ENCODE measurements at regions of chr3 and their contacts with region 1.

Region 1: DNA sequence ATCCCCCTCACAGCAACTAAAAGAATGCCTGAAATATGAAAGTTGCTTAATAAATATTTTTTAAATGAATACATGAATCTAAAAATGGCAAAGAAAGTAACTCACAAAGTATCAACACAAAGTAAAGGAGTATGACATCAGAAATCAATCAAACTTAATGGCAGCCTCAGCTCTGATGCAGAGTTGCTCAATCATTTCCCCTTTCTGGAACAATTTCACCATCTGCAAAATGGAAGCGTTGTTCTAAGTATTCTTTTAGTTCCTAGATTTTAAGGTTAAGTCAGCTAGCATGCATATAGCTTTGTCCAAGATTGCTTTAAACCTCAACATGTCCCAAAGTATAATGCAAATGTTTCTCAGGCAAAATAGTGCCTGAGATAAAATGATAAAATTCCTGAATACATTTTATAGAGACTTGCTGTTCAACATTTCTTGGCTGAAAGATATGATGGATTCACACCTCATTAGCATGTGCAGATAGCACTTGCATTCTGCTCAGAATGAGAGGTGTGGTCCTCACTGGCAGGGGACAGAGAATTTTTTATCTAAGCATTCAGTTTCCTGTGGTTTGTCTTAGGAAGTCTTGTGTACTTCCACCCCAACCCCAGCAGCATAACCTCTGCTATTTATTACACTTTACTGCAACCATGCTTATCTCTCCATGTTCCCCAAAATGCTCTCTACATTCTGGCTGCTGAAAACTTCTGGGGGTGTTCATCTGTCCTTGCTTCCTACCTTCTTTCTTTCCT is 429.3 kb downstream of the GRM7 start:
- DNase-seq: no peak
- ATAC-seq: no peak

Region 2: DNA sequence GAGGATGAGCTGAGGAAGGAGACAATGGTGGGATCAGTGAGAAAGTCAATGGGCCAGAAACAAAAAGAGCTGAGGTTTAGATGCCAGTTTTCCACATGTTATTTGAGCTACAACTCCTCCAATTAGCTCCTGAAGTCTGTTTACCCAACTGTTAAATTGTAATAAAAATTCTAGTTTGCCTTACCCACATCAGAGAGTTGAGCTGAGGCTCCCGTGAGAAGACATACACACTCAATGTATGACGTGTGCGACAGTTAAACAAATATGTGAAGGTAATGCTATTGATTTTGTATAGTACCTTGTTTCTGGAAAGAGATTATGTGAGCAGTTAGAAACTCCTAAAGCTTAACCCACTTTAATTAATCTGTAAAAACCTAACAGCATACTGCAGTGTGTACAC is 747.5 kb before region 1 on chr3:
- intact Hi-C with region 1: no loop called
- DNase-seq: no peak
- ATAC-seq: no peak

Region 3: DNA sequence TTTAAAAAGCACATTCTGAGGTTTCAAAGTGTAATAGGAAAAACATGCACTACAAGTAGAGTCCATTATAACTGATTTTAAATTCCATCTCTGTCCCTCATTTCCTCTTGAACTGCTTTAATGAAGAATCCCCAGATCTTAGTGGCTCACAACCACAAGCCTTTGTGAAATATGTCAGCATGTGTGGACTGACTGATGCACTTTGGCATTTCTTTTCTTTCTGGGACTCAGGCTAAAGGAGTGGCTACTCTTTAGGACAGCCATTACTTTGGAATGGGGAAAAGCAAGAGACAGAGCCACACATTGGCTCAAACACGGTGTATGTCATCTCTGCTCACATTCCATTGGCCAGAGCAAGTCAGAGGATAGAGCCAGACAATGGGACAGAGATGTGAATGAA is 289.8 kb before region 1 on chr3:
- intact Hi-C with region 1: no loop called
- DNase-seq: no peak
- ATAC-seq: no peak

Region 4: DNA sequence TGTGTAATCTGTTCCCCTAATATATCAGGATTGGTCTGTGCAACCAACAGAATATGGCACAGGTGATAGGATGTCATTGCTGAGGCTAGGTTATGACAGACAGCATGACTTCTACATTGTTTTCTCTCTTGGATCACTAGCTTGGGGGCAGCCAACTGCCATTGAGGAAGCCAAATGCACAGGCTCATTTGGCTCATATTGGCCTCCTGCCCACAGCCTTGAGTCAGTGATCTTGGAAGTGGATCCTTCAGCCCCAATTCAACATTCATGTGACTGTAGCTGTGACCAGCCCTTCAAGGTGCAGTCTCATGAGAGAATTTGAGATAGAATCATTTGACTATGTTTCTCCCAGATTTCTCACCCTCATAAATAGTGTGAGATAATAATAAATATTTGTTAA is 246.3 kb after region 1 on chr3:
- intact Hi-C with region 1: loop called (anchors 10 kb)
- DNase-seq: no peak
- ATAC-seq: no peak